ENCODE measurements at regions of chr18 and their contacts with region 1.

Region 1: GRCh38 chr18:54717673-54718407 is 110.4 kb upstream of the RAB27B start:
- DNase-seq: peak in 8 of 9 donors; percentile 9 to 46 (median 34)
- ATAC-seq: peak; percentile 92
- H3K4me3 ChIP-seq: peak overlapping the region; percentile 61
- H3K4me3 Mint-ChIP-seq: peak overlapping the region; percentile 38 to 90 (median 76)
- H3K27ac ChIP-seq: no peak overlapping the region
- H3K27ac Mint-ChIP-seq: peak overlapping the region in 6 of 9 donors; percentile 3 to 76 (median 26)
- H3K4me1 ChIP-seq: peaks cover 15 to 22% of the 10 kb centered on the region in 2 donors
- H3K4me1 Mint-ChIP-seq: peaks cover 23 to 54% (median 45%) of the 10 kb centered on the region in 7 donors
- H3K27me3 ChIP-seq: no peaks in the 10 kb centered on the region
- H3K27me3 Mint-ChIP-seq: peaks cover 0 to 37% (median 8%) of the 10 kb centered on the region in 5 donors

Region 2: DNA sequence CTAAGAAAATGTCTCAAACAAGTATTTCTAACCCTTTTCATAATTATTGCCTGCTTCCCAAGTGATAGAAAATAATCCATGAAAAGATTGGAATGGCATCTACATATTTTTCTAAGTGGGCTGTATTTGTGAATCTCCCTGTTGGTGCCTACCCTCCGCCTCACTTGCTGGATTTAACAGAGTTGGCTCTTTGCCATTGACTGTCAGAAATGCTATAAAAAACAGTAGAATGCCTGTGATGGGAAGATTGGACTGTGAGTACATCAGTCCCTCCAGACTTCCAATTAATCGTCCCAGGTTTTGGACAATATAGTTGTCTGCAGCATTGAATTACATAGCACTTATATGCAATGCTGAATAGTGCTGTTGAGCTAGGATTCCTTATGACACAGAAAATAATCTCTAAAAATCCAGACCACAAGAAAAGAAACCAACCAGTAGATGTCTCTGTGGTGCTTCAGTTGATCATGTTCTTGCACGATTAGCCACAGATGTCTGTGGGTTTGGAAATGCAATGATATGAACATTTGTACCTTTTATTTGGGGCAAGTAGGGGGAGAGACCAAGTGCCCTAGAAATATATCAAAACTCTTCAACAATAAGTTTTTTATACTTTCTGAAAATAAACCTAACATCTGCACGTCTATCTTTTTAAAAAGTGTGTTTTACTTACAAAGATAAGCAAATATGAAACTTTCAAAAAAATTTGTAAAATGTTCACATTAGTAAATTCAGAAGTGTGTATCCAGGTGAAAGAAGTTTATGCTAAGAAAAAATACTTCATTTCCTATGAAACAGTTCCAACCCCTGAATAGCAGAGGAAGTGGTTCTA is 38.3 kb before region 1 on chr18:
- CTCF ChIA-PET with region 1: no interaction called
- POLR2A ChIA-PET with region 1: no interaction called
- intact Hi-C with region 1: loop called in 1 of 2 experiments (anchors 1 kb)
- DNase-seq: peak in 6 of 9 donors; percentile 1 to 49 (median 26)
- ATAC-seq: no peak
- H3K4me3 ChIP-seq: no peak overlapping the region
- H3K4me3 Mint-ChIP-seq: no peak overlapping the region
- H3K27ac ChIP-seq: no peak overlapping the region
- H3K27ac Mint-ChIP-seq: no peak overlapping the region
- H3K4me1 ChIP-seq: no peaks in the 10 kb centered on the region
- H3K4me1 Mint-ChIP-seq: no peaks in the 10 kb centered on the region
- H3K27me3 ChIP-seq: no peaks in the 10 kb centered on the region
- H3K27me3 Mint-ChIP-seq: peaks cover 0 to 30% (median 0%) of the 10 kb centered on the region in 5 donors

Region 3: DNA sequence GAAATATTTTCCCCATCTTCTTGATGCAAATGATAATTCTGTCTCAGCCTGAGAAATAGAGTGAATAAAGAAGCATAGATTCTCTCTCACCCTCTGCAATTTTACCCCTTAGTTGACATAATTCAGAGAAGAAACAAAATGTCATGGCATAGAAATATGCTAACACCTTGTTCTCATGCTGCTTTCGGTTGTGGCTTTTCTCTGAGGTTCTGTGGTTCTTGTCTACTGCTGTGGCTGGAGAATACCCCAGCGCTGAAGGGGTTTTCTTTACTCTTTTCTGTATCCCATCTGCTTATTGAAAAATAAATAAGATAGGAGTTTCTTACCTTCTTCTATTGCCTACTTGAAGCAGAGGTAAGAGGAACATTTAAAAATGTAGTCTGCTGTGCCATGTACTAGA is 95.0 kb after region 1 on chr18:
- CTCF ChIA-PET with region 1: no interaction called
- POLR2A ChIA-PET with region 1: no interaction called
- intact Hi-C with region 1: no loop called
- DNase-seq: no peak
- ATAC-seq: peak; percentile 79
- H3K4me3 ChIP-seq: no peak overlapping the region
- H3K4me3 Mint-ChIP-seq: peak overlapping the region in 1 of 10 donors; percentile 11
- H3K27ac ChIP-seq: no peak overlapping the region
- H3K27ac Mint-ChIP-seq: no peak overlapping the region
- H3K4me1 ChIP-seq: peaks cover 0 to 3% of the 10 kb centered on the region in 2 donors
- H3K4me1 Mint-ChIP-seq: peaks cover 3 to 22% (median 9%) of the 10 kb centered on the region in 7 donors
- H3K27me3 ChIP-seq: no peaks in the 10 kb centered on the region
- H3K27me3 Mint-ChIP-seq: peaks cover 0 to 41% (median 8%) of the 10 kb centered on the region in 5 donors

Region 4: GRCh38 chr18:54828281-54828881 is 110.5 kb after region 1 on chr18 and contains the start of gene RAB27B:
- CTCF ChIA-PET with region 1: no interaction called
- POLR2A ChIA-PET with region 1: no interaction called
- intact Hi-C with region 1: loop called (anchors 5 kb)
- DNase-seq: peak; percentile 41 to 68 (median 61)
- ATAC-seq: peak; percentile 96
- H3K4me3 ChIP-seq: peak within 1 kb of the TSS; percentile 72
- H3K4me3 Mint-ChIP-seq: peak within 1 kb of the TSS; percentile 87 to 95 (median 92)
- H3K27ac ChIP-seq: peak within 1 kb of the TSS; percentile 63
- H3K27ac Mint-ChIP-seq: peak within 1 kb of the TSS in 8 of 9 donors; percentile 60 to 87 (median 76)
- H3K4me1 ChIP-seq: no peaks in the 10 kb centered on the region
- H3K4me1 Mint-ChIP-seq: peaks cover 17 to 45% (median 24%) of the 10 kb centered on the region in 7 donors
- H3K27me3 ChIP-seq: no peaks in the 10 kb centered on the region
- H3K27me3 Mint-ChIP-seq: peaks cover 0 to 34% (median 0%) of the 10 kb centered on the region in 5 donors
- total RNA-seq, gene RAB27B: 1.3 to 6.4 (median 1.6) TPM

Region 5: GRCh38 chr18:55589625-55590291 is 871.9 kb after region 1 on chr18:
- CTCF ChIA-PET with region 1: no interaction called
- POLR2A ChIA-PET with region 1: no interaction called
- intact Hi-C with region 1: loop called in 1 of 2 experiments (anchors 5 kb)
- DNase-seq: peak; percentile 61 to 89 (median 77)
- ATAC-seq: peak; percentile 97
- H3K4me3 ChIP-seq: peak overlapping the region; percentile 25
- H3K4me3 Mint-ChIP-seq: peak overlapping the region; percentile 82 to 94 (median 89)
- H3K27ac ChIP-seq: peak overlapping the region; percentile 53
- H3K27ac Mint-ChIP-seq: peak overlapping the region; percentile 25 to 86 (median 75)
- H3K4me1 ChIP-seq: no peaks in the 10 kb centered on the region
- H3K4me1 Mint-ChIP-seq: peaks cover 12 to 42% (median 36%) of the 10 kb centered on the region in 7 donors
- H3K27me3 ChIP-seq: peaks cover 0 to 8% of the 10 kb centered on the region in 2 donors
- H3K27me3 Mint-ChIP-seq: peaks cover 38 to 70% (median 48%) of the 10 kb centered on the region in 5 donors

Measured in naive thymus-derived CD4-positive, alpha-beta T cell (primary cell).